Activated CD4-positive, alpha-beta memory T cell treated with anti-CD3 and anti-CD28 coated beads, Interleukin-2, amount 10 ng/mL, durations not matched to agents 7 days and 5 days (primary cell): ENCODE measurements at regions of chr3 and their contacts with region 1.

Region 1: DNA sequence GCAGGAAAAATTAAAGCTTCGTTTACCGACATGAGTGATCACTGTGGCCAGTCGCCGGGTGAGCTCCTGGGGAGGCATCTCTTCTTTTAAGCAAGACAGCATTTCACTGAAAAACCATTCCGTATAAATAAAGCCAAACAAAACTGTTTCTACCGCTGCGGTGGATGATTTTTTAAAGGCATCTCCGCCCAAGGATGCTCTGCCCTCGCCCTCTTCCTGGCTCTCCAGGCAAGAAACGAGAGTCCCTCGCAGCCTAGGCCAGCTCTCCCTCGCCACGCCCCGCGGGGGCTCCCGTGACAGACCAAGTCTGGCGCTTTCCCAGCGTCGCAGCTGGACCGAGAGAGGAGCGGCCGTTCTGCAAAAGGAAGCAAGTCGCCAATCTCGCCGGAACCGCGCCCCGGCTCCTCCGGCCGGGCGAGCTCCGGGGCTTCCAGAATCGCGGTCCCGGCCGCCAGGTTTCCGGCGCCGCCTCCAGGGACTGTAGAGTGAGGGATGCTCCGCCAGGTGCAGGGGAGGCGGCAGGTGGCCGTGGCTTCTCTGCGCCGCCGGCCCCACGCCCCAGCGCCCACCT is 458 bp downstream of the MCF2L2 start:
- DNase-seq: peak; percentile 46
- H3K4me3 Mint-ChIP-seq: peak overlapping the region; percentile 77
- H3K27ac Mint-ChIP-seq: peak overlapping the region; percentile 53
- H3K4me1 Mint-ChIP-seq: peaks cover 54% of the 10 kb centered on the region
- H3K27me3 Mint-ChIP-seq: peaks cover 2% of the 10 kb centered on the region

Region 2: GRCh38 chr3:183438735-183439134 is 10.8 kb after region 1 on chr3:
- CTCF ChIA-PET with region 1: interaction called, 11 read pairs
- POLR2A ChIA-PET with region 1: interaction called, 36 read pairs
- DNase-seq: no peak
- H3K4me3 Mint-ChIP-seq: no peak overlapping the region
- H3K27ac Mint-ChIP-seq: peak overlapping the region; percentile 64
- H3K4me1 Mint-ChIP-seq: peaks cover 64% of the 10 kb centered on the region
- H3K27me3 Mint-ChIP-seq: peaks cover 8% of the 10 kb centered on the region

Region 3: DNA sequence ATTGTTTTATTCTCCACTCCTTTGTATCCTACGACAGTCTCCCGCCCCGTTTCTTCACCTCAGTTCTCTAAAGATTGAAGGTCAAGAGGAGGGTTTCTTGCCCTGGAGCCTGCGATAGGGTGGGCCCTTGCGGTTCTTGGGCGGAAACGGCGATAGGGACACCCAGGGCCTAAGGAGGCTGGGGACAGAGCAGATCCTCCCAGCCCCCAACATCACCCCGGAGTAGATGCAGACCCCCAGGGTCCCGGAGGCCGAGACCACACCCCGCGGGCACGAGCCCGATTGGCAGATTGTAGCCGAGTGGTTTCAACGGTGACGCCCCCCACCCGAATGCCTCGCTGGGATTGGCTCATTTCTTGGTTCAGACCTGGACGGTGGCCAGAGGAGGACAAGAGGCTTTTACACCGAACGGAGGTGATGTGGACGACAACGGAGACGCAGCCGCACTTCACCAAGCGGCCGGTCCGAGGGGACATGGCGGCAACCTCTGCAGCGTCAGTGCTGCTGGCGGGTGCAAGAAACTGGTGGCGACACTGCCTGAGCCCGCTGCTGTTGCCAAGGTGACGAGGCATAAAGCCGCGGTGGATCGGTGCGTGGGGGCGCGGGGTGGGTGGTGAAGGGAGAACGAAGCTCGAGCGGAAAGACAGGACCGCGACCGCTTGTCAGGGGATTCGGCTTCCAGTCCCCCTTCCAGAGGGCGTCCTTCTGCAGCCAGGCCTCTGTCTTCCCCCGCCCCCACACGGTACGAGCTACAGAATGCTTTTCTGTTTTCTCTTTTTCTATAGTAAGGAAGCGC is 19.4 kb after region 1 on chr3:
- CTCF ChIA-PET with region 1: interaction called, 6 read pairs
- POLR2A ChIA-PET with region 1: interaction called, 15 read pairs
- DNase-seq: peak; percentile 86
- H3K4me3 Mint-ChIP-seq: peak overlapping the region; percentile 92
- H3K27ac Mint-ChIP-seq: peak overlapping the region; percentile 83
- H3K4me1 Mint-ChIP-seq: peaks cover 20% of the 10 kb centered on the region
- H3K27me3 Mint-ChIP-seq: peaks cover 9% of the 10 kb centered on the region